Calu3 (cell line): ENCODE measurements at regions of chr6 and their contacts with region 1.

Region 1: DNA sequence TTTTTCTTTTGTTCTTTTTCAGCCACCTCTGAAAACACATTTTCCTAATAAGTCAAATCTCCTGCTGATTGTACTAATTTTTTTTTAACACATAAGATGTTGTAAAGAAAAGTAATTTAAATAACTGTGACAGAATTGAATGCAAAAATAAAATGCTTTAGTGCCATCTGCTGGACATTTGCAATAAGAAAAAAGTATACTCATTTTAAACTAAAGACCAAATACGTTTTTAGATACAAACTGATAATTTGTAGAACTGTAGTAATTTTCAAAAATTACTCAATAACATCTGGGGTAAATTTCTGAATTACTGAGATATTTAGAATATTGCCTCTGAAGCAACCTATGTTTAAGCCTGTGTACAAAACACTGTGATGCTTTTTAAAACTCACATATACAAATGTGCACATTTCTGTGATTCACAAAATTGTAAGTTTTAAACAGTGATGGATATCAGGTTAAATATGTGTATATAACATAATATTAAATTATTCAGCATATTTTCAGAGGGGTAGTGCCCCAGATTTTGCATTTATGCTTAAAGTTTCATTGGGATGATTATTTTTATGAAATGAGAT is 198.7 kb downstream of the RIMS1 start:
- DNase-seq: no peak
- H3K4me3 Mint-ChIP-seq: no peak overlapping the region
- H3K27ac Mint-ChIP-seq: no peak overlapping the region
- H3K4me1 Mint-ChIP-seq: no peaks in the 10 kb centered on the region
- H3K27me3 Mint-ChIP-seq: no peaks in the 10 kb centered on the region
- CTCF ChIP-seq: peak; percentile 35

Region 2: DNA sequence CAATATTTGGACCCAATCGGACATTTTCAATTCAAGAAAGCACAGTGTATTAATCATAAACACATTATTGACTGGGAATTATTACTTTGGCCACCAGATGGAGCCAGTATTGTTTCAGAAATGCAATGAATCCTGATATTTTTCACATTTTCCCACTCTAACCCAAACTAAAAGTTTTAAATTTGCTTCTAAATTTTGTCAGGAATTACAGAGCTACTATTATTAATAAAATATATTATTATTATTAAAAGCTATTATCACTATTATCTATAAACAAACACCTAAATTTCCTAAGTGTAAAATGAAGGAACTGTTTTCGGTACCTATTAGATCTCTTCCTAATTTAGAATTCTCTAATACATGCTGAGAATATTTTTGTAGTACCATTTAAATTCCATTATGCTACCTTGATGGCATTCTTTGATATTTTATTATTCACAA is 551.1 kb before region 1 on chr6:
- CTCF ChIA-PET with region 1: interaction called, 3 read pairs
- intact Hi-C with region 1: loop called (anchors 1 kb)
- DNase-seq: peak; percentile 49
- H3K4me3 Mint-ChIP-seq: no peak overlapping the region
- H3K27ac Mint-ChIP-seq: no peak overlapping the region
- H3K4me1 Mint-ChIP-seq: peaks cover 53% of the 10 kb centered on the region
- H3K27me3 Mint-ChIP-seq: no peaks in the 10 kb centered on the region
- CTCF ChIP-seq: peak; percentile 77

Region 3: DNA sequence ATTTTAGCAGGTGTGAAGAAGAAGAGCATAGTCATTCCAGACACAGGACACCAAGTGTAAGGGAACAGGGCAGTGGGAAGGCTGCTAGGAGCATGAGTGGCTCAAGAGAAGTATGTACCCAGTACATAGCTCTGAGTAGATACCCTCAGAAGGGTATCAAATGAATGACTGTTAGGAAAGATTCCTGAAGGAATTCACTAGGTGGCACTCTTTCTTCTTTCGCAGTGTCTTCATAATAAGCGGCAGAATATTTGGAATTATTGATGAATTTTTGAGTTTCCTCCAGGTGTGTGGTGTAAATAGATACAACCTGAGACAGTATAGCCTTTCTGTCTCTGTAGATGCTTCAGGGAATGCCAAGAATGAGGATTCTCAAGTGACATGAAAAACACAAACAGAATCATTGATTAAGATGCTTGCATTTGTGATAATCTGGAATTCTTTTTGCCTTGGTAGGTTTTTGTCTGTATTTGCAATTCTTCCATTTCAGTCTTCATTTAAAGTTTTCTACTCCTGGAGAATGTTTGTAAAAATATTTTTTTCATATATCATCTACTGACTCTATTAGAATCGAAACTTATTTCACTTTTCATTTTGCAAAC is 463.1 kb before region 1 on chr6:
- CTCF ChIA-PET with region 1: no interaction called
- intact Hi-C with region 1: loop called (anchors 1 kb)
- DNase-seq: no peak
- H3K4me3 Mint-ChIP-seq: no peak overlapping the region
- H3K27ac Mint-ChIP-seq: no peak overlapping the region
- H3K4me1 Mint-ChIP-seq: peaks cover 8% of the 10 kb centered on the region
- H3K27me3 Mint-ChIP-seq: no peaks in the 10 kb centered on the region
- CTCF ChIP-seq: peak; percentile 72

Region 4: GRCh38 chr6:71855406-71855805 is 229.7 kb before region 1 on chr6:
- CTCF ChIA-PET with region 1: no interaction called
- intact Hi-C with region 1: loop called (anchors 2 kb)
- DNase-seq: no peak
- H3K4me3 Mint-ChIP-seq: no peak overlapping the region
- H3K27ac Mint-ChIP-seq: no peak overlapping the region
- H3K4me1 Mint-ChIP-seq: no peaks in the 10 kb centered on the region
- H3K27me3 Mint-ChIP-seq: no peaks in the 10 kb centered on the region
- CTCF ChIP-seq: no peak